ENCODE measurements at regions of chr17 and their contacts with region 1.

Region 1: DNA sequence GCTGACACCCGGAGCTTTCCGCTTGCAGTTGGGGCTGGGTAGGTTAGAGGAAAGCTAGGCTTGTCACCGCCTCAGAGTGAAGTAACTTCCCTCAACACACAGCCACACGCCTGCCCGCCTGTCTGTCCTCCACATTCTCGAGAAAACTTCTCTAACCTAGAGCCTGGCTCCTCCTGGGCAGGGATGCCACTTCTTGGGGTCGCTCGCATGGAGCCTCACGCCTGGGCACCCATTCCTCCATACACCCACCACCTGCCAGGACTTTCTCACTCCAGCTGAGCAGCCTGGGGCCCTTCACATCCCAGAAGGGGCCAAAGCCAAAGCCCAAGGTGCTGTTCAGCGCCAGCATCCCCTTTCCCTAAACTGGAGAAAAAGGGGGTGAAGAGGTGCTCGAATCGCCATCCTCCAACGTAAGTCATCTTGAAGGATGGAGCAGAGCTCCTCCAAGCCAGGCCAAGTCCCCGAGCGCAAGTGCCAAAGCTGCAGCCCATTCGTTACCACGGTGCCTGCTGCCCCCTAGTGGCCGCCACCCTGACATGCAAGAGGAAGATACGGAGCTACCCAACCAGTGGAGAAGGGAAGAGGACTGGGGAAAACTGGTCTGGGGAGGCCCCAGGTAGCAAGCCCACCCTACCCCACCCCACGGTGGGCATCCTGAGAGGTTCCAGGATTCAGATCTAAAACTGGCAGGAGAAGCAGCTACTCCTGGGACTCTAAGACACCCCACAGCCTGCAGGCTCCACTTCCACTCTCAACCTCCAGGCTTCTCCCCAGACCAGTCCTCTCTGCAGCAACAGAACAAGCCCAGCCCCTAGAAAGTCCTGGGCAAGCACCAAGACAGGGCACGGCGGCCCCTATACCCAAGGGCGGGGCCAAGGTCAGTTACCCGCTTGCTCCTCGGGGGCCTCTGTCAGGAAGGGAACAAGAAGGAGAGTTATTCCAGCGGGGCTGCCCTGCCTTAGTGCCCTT is 63.1 kb downstream of the MYO18A start:
- DNase-seq: peak; percentile 84
- ATAC-seq: peak; percentile 80
- H3K4me3 Mint-ChIP-seq: no peak overlapping the region
- H3K27ac Mint-ChIP-seq: no peak overlapping the region
- H3K4me1 Mint-ChIP-seq: peaks cover 11% of the 10 kb centered on the region
- H3K27me3 Mint-ChIP-seq: no peaks in the 10 kb centered on the region

Region 2: GRCh38 chr17:28871056-28871579 is 246.0 kb before region 1 on chr17:
- CTCF ChIA-PET with region 1: no interaction called
- DNase-seq: peak; percentile 86
- ATAC-seq: peak; percentile 99
- H3K4me3 Mint-ChIP-seq: no peak overlapping the region
- H3K27ac Mint-ChIP-seq: peak overlapping the region; percentile 93
- H3K4me1 Mint-ChIP-seq: peaks cover 24% of the 10 kb centered on the region
- H3K27me3 Mint-ChIP-seq: no peaks in the 10 kb centered on the region

Region 3: GRCh38 chr17:28967221-28968140 is 149.6 kb before region 1 on chr17:
- CTCF ChIA-PET with region 1: interaction called, 337 read pairs
- DNase-seq: no peak
- ATAC-seq: no peak
- H3K4me3 Mint-ChIP-seq: no peak overlapping the region
- H3K27ac Mint-ChIP-seq: no peak overlapping the region
- H3K4me1 Mint-ChIP-seq: no peaks in the 10 kb centered on the region
- H3K27me3 Mint-ChIP-seq: peaks cover 16% of the 10 kb centered on the region

Region 4: DNA sequence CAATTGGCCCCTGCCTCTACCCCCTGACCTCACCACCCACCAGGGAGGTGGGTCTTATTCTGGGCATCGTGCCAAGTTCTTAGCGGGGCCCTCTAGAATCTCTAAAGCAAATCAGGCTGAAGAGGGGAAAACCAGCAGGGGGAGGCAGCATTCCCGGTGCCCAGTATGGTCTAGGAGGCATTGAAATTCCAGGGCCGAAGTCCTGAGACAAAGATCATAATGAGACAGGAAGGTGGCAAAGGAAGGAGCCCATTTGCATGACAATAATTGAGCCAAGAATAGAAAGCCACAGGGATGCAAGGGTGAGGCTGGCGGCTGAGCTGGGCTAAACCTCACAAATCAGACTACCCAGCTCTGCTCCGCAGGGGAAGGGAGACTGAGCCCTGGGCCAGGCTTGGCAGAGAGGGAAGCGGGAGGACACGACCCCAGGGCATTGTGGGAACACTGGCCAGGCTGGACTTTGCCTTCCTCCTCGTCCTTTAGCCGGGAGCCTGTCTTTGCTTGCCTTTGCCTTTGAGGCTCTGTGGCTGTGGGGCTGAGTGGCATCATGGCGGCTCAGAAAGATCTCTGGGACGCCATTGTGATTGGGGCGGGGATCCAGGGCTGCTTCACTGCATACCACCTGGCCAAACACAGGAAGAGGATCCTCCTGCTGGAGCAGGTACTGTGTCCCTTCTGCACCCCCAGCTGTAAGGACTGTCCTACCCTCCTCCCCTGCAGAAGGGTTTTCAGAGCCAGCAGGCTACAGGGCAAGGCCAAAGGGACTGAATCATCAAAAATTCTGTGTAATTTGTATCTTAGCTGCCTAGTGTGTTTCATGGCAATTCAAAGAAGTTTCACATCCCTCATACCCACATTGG is 74.2 kb before region 1 on chr17 and contains the start of gene PIPOX:
- CTCF ChIA-PET with region 1: no interaction called
- DNase-seq: no peak
- ATAC-seq: no peak
- H3K4me3 Mint-ChIP-seq: no peak within 1 kb of the TSS
- H3K27ac Mint-ChIP-seq: no peak within 1 kb of the TSS
- H3K4me1 Mint-ChIP-seq: peaks cover 10% of the 10 kb centered on the region
- H3K27me3 Mint-ChIP-seq: peaks cover 3% of the 10 kb centered on the region
- total RNA-seq, gene PIPOX: 1.6 to 2.2 TPM

Region 5: DNA sequence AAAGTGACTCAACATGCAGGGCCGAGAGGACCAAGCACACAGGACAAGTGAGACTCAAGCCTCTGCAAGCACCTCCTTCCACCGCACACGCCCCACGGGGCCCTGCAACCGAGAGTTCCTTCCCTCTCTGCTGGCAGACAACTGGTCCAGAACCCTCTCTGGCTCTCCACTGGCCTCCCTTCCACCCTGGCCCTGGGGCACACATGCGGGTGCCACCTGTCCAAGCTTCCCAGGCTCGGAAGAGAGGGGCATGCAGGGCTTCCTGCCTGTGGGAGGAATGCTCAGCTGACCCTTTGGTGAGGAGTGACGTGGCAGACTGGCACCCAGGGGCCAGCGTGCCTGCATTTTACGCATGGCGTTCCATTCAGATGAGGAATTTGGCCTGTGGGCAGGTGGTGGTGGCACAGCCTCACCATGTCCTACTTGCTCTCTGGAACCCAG is 14.3 kb before region 1 on chr17:
- CTCF ChIA-PET with region 1: interaction called, 22 read pairs
- DNase-seq: no peak
- ATAC-seq: no peak
- H3K4me3 Mint-ChIP-seq: no peak overlapping the region
- H3K27ac Mint-ChIP-seq: no peak overlapping the region
- H3K4me1 Mint-ChIP-seq: no peaks in the 10 kb centered on the region
- H3K27me3 Mint-ChIP-seq: no peaks in the 10 kb centered on the region

Region 6: GRCh38 chr17:29180034-29180787 is 63.1 kb after region 1 on chr17 and contains the start of gene MYO18A:
- CTCF ChIA-PET with region 1: interaction called, 11 read pairs
- DNase-seq: peak; percentile 84
- ATAC-seq: peak; percentile 94
- H3K4me3 Mint-ChIP-seq: peak within 1 kb of the TSS; percentile 33
- H3K27ac Mint-ChIP-seq: no peak within 1 kb of the TSS
- H3K4me1 Mint-ChIP-seq: peaks cover 34% of the 10 kb centered on the region
- H3K27me3 Mint-ChIP-seq: peaks cover 6% of the 10 kb centered on the region
- total RNA-seq, gene MYO18A: 67.7 to 85.8 TPM

Region 7: GRCh38 chr17:29326023-29326813 is 209.1 kb after region 1 on chr17:
- CTCF ChIA-PET with region 1: no interaction called
- DNase-seq: no peak
- ATAC-seq: no peak
- H3K4me3 Mint-ChIP-seq: no peak overlapping the region
- H3K27ac Mint-ChIP-seq: no peak overlapping the region
- H3K4me1 Mint-ChIP-seq: no peaks in the 10 kb centered on the region
- H3K27me3 Mint-ChIP-seq: no peaks in the 10 kb centered on the region

Measured in activated CD8-positive, alpha-beta memory T cell treated with anti-CD3 and anti-CD28 coated beads, Interleukin-2, amount 10 ng/mL, durations not matched to agents 7 days and 5 days (primary cell).